ENCODE measurements at regions of chr1 and their contacts with region 1.

Region 1: GRCh38 chr1:160629286-160630210 is 17.3 kb downstream of the SLAMF1 start:
- DNase-seq: peak; percentile 85
- H3K4me3 Mint-ChIP-seq: peak overlapping the region; percentile 69
- H3K27ac Mint-ChIP-seq: peak overlapping the region; percentile 98
- H3K4me1 Mint-ChIP-seq: peaks cover 93% of the 10 kb centered on the region
- H3K27me3 Mint-ChIP-seq: no peaks in the 10 kb centered on the region

Region 2: GRCh38 chr1:159077120-159077961 is 1552.2 kb before region 1 on chr1:
- CTCF ChIA-PET with region 1: no interaction called
- POLR2A ChIA-PET with region 1: no interaction called
- intact Hi-C with region 1: loop called (anchors 2 kb)
- DNase-seq: peak; percentile 100
- H3K4me3 Mint-ChIP-seq: peak overlapping the region; percentile 95
- H3K27ac Mint-ChIP-seq: peak overlapping the region; percentile 97
- H3K4me1 Mint-ChIP-seq: peaks cover 52% of the 10 kb centered on the region
- H3K27me3 Mint-ChIP-seq: no peaks in the 10 kb centered on the region

Region 3: DNA sequence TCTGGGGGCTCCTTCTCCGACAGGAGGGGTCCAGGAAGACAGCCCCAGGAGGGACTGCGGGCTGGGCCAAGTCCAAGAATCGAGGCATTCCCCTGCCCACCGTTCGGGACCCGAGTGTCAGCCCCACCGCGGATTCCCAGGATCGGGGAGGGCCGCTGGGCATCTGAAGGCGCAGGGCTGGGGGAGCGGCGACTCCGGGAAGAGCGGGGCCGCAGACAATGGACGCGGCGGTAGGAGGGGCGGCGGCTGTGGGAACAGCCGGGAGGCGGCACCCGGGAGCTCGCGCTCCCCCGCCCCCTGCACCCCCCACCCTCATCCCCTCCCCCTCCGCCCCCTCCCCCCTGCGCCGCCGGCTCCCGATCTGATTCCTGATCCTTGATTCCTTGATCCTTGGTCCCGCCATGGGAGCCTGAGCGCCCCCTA is 229.3 kb before region 1 on chr1 and contains the start of gene VANGL2:
- CTCF ChIA-PET with region 1: no interaction called
- POLR2A ChIA-PET with region 1: no interaction called
- intact Hi-C with region 1: no loop called
- DNase-seq: peak; percentile 46
- H3K4me3 Mint-ChIP-seq: no peak within 1 kb of the TSS
- H3K27ac Mint-ChIP-seq: no peak within 1 kb of the TSS
- H3K4me1 Mint-ChIP-seq: no peaks in the 10 kb centered on the region
- H3K27me3 Mint-ChIP-seq: peaks cover 17% of the 10 kb centered on the region
- total RNA-seq, gene VANGL2: not detected

Region 4: DNA sequence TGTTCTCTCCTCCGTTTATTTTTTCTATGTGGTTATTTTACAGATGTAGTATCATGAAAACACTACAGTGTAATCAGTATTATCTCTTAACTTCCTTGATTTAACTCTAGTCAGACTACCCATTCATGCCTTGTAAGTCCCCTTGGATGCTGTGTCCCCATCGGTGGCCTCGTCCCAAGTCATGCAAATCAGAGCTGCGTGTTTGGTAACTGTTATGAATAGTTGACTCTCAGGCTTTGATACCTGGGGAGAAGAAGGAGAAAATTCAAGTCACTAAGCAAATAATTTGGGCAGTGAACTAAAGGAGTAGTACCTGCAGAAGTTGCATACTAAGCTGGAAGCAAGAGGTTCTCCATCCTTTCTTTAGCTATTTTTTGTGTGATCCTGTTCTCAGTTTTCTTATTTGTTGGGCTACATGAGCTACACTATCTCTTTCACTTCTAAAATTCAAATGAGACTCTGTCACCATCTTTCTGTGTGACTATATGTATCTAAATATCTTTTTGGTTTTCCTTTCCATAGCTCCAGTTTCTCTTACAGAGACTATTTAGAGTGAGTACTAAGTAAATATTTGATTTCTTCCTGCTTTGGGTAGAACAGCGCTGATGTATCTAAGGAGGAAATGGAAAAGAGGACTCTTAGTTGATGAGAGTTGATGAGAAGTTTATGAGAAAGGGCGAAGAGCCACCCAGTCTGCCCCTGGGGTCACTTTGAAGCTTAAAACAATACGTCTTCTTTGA is 178.3 kb before region 1 on chr1:
- CTCF ChIA-PET with region 1: no interaction called
- POLR2A ChIA-PET with region 1: interaction called, 5 read pairs
- intact Hi-C with region 1: loop called (anchors 1 kb)
- DNase-seq: peak; percentile 45
- H3K4me3 Mint-ChIP-seq: peak overlapping the region; percentile 53
- H3K27ac Mint-ChIP-seq: peak overlapping the region; percentile 97
- H3K4me1 Mint-ChIP-seq: peaks cover 79% of the 10 kb centered on the region
- H3K27me3 Mint-ChIP-seq: no peaks in the 10 kb centered on the region

Region 5: DNA sequence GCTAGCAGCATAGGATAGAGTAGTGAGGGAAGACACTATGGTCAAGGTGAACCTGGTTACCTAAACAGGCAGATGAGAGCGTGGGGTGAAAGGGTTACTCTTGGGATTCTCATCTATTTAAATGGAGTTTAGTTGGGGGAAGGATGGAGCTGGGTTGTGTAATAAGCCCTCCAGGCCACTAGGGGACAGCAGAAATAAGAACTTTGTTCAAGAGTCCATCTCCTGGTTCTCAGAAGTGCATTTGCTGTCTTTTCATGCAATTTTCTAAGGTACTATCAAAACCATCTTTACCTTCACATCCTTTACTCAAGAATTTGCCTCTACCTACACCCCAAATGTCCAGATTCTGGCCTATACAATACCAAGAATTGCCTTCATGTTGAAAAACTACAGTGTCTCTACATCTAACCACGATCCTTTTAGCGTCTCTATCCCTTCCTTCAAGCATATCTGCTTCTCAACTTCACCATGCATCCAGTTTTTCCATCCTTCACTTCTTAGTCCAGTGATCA is 10.7 kb before region 1 on chr1:
- CTCF ChIA-PET with region 1: interaction called, 11 read pairs
- POLR2A ChIA-PET with region 1: interaction called, 21 read pairs
- intact Hi-C with region 1: no loop called
- DNase-seq: peak; percentile 59
- H3K4me3 Mint-ChIP-seq: no peak overlapping the region
- H3K27ac Mint-ChIP-seq: peak overlapping the region; percentile 68
- H3K4me1 Mint-ChIP-seq: peaks cover 63% of the 10 kb centered on the region
- H3K27me3 Mint-ChIP-seq: no peaks in the 10 kb centered on the region

Region 6: GRCh38 chr1:160675641-160676410 is 46.3 kb after region 1 on chr1:
- CTCF ChIA-PET with region 1: interaction called, 7 read pairs
- POLR2A ChIA-PET with region 1: interaction called, 13 read pairs
- intact Hi-C with region 1: loop called (anchors 1 kb)
- DNase-seq: peak; percentile 88
- H3K4me3 Mint-ChIP-seq: no peak overlapping the region
- H3K27ac Mint-ChIP-seq: peak overlapping the region; percentile 76
- H3K4me1 Mint-ChIP-seq: peaks cover 49% of the 10 kb centered on the region
- H3K27me3 Mint-ChIP-seq: no peaks in the 10 kb centered on the region

Region 7: GRCh38 chr1:160795951-160796383 is 166.4 kb after region 1 on chr1 and contains the start of gene LY9:
- CTCF ChIA-PET with region 1: interaction called, 4 read pairs
- POLR2A ChIA-PET with region 1: interaction called, 4 read pairs
- intact Hi-C with region 1: loop called (anchors 2 kb)
- DNase-seq: peak; percentile 90
- H3K4me3 Mint-ChIP-seq: peak within 1 kb of the TSS; percentile 77
- H3K27ac Mint-ChIP-seq: peak within 1 kb of the TSS; percentile 88
- H3K4me1 Mint-ChIP-seq: peaks cover 61% of the 10 kb centered on the region
- H3K27me3 Mint-ChIP-seq: no peaks in the 10 kb centered on the region
- total RNA-seq, gene LY9: 4.8 to 4.9 TPM

Measured in activated CD4-positive, alpha-beta memory T cell treated with anti-CD3 and anti-CD28 coated beads for 36 hours (primary cell).